Activated CD4-positive, alpha-beta memory T cell treated with anti-CD3 and anti-CD28 coated beads, Interleukin-2, amount 10 ng/mL, durations not matched to agents 7 days and 5 days (primary cell): ENCODE measurements at regions of chr12 and their contacts with region 1.

Region 1: GRCh38 chr12:56299853-56300643 is at the start of gene CS:
- DNase-seq: peak; percentile 99
- H3K4me3 Mint-ChIP-seq: peak within 1 kb of the TSS; percentile 95
- H3K27ac Mint-ChIP-seq: peak within 1 kb of the TSS; percentile 84
- H3K4me1 Mint-ChIP-seq: peaks cover 50% of the 10 kb centered on the region
- H3K27me3 Mint-ChIP-seq: no peaks in the 10 kb centered on the region
- total RNA-seq, gene CS: 188 to 193 TPM

Region 2: DNA sequence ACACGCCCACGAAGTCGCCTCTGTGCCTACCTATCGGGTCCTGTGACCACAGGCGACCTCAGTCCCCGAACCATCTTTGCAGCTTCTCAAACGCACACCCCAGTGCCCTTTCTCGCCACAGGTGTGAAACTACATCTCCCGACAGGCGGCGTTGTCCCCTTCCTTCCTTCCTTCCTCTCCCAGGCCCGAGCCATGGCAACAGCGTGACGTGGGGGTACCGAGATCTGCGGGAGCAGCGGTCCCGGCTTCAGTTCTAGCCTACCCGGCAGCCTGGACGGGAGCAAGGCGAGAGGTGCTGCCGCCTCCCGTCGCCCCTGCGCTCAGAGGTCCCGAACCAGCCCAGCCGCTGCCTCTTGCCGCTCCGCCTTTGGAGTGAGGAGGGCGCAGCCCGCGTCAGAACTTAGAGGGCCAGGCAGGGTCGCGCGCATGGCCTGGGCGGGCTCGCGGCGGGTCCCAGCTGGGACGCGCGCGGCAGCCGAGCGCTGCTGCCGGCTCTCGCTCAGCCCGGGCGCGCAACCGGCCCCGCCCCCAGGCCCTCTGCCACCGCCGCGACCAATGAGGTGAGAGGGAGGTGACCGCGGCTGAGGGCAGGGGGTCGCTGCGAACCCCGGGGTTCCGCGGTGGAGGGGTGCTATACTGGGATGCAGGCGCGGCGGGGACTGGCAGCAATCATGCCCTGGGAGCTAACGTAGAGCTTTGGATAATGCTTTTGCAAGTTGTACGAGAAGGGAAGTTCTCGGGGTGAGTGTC is 33.2 kb before region 1 on chr12 and contains the start of gene COQ10A:
- CTCF ChIA-PET with region 1: interaction called, 4 read pairs
- POLR2A ChIA-PET with region 1: interaction called, 18 read pairs
- DNase-seq: peak; percentile 90
- H3K4me3 Mint-ChIP-seq: peak within 1 kb of the TSS; percentile 87
- H3K27ac Mint-ChIP-seq: peak within 1 kb of the TSS; percentile 80
- H3K4me1 Mint-ChIP-seq: peaks cover 21% of the 10 kb centered on the region
- H3K27me3 Mint-ChIP-seq: no peaks in the 10 kb centered on the region
- total RNA-seq, gene COQ10A: 12.8 to 16.7 TPM